ENCODE measurements at regions of chr7 and their contacts with region 1.

Region 1: DNA sequence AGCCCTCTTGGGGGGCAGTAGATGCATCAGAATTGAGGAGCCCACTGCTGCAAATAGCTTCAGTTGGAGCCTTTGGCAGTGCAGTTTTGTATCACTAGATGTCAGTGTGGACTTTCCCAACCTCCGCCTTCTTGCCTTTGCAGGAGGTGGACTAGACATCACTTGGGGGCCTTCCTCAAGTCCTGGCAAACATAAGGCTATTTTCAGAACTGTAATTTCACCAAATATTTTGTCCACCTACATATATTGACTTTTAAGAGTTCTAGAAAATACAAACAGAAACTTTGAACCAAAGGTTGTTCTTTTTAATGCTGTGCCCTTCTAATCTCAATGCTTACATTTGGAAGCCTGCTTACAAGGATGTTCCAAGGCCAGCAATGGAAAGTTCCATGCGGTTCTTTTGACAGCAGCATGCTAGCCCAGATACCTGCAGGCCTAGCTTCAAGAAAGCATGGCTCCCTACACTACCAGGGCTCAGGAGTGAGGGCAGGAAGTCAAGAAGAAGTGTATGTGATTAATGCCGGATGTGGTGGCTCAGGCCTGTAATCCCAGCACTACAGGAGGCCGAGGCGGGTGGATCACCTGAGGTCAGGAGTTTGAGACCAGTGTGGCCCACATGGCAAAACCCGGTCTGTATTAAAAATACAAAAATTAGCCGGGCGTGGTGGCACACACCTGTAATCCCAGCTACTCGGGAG is 8.0 kb upstream of the ZNRF2 start:
- DNase-seq: no peak
- ATAC-seq: peak; percentile 93
- H3K4me3 ChIP-seq: no peak overlapping the region
- H3K27ac ChIP-seq: no peak overlapping the region
- H3K4me1 ChIP-seq: peaks cover 9% of the 10 kb centered on the region; the same call in 1 of the 2 replicates
- H3K27me3 ChIP-seq: no peaks in the 10 kb centered on the region
- CTCF ChIP-seq: peak; percentile 83 to 91 (median 84)
- EP300 ChIP-seq: no peak
- POLR2A ChIP-seq: no peak
- RAD21 ChIP-seq: peak; percentile 93

Region 2: GRCh38 chr7:29968683-29969395 is 307.5 kb before region 1 on chr7:
- CTCF ChIA-PET with region 1: no interaction called
- POLR2A ChIA-PET with region 1: no interaction called
- RAD21 ChIA-PET with region 1: no interaction called
- SMC1A ChIA-PET with region 1: no interaction called
- in situ Hi-C with region 1: no loop called
- intact Hi-C with region 1: no loop called
- DNase-seq: no peak
- ATAC-seq: no peak
- H3K4me3 ChIP-seq: no peak overlapping the region
- H3K27ac ChIP-seq: no peak overlapping the region
- H3K4me1 ChIP-seq: no peaks in the 10 kb centered on the region
- H3K27me3 ChIP-seq: no peaks in the 10 kb centered on the region
- CTCF ChIP-seq: no peak
- EP300 ChIP-seq: no peak
- POLR2A ChIP-seq: no peak
- RAD21 ChIP-seq: no peak

Region 3: GRCh38 chr7:30164567-30164966 is 111.8 kb before region 1 on chr7:
- CTCF ChIA-PET with region 1: interaction called, 182 read pairs
- POLR2A ChIA-PET with region 1: interaction called, 4 read pairs
- RAD21 ChIA-PET with region 1: interaction called, 71 read pairs
- SMC1A ChIA-PET with region 1: interaction called, 148 read pairs
- in situ Hi-C with region 1: loop called (anchors 5 kb)
- intact Hi-C with region 1: loop called (anchors 1 kb)
- DNase-seq: no peak
- ATAC-seq: peak; percentile 65
- H3K4me3 ChIP-seq: no peak overlapping the region
- H3K27ac ChIP-seq: no peak overlapping the region
- H3K4me1 ChIP-seq: peaks cover 27% of the 10 kb centered on the region
- H3K27me3 ChIP-seq: no peaks in the 10 kb centered on the region
- CTCF ChIP-seq: peak; percentile 47 to 81 (median 71)
- EP300 ChIP-seq: no peak
- POLR2A ChIP-seq: no peak
- RAD21 ChIP-seq: peak; percentile 97

Region 4: GRCh38 chr7:30225863-30226613 is 50.3 kb before region 1 on chr7:
- CTCF ChIA-PET with region 1: interaction called, 15 read pairs
- POLR2A ChIA-PET with region 1: interaction called, 4 read pairs
- RAD21 ChIA-PET with region 1: interaction called, 4 read pairs
- SMC1A ChIA-PET with region 1: interaction called, 3 read pairs
- in situ Hi-C with region 1: no loop called
- intact Hi-C with region 1: loop called (anchors 2 kb)
- DNase-seq: peak; percentile 79
- ATAC-seq: peak; percentile 91
- H3K4me3 ChIP-seq: no peak overlapping the region
- H3K27ac ChIP-seq: peak overlapping the region; percentile 29; the same call in 1 of the 2 replicates
- H3K4me1 ChIP-seq: peaks cover 25% of the 10 kb centered on the region
- H3K27me3 ChIP-seq: no peaks in the 10 kb centered on the region
- CTCF ChIP-seq: no peak
- EP300 ChIP-seq: peak; percentile 83 to 91
- POLR2A ChIP-seq: no peak
- RAD21 ChIP-seq: no peak

Region 5: GRCh38 chr7:30322271-30323005 is 46.1 kb after region 1 on chr7:
- CTCF ChIA-PET with region 1: interaction called, 16 read pairs
- POLR2A ChIA-PET with region 1: no interaction called
- RAD21 ChIA-PET with region 1: interaction called, 18 read pairs
- SMC1A ChIA-PET with region 1: interaction called, 50 read pairs
- in situ Hi-C with region 1: no loop called
- intact Hi-C with region 1: no loop called
- DNase-seq: peak; percentile 74
- ATAC-seq: peak; percentile 90
- H3K4me3 ChIP-seq: peak overlapping the region; percentile 57
- H3K27ac ChIP-seq: peak overlapping the region; percentile 87
- H3K4me1 ChIP-seq: peaks cover 18% of the 10 kb centered on the region
- H3K27me3 ChIP-seq: no peaks in the 10 kb centered on the region
- CTCF ChIP-seq: no peak
- EP300 ChIP-seq: no peak
- POLR2A ChIP-seq: peak; percentile 26; the same call in 1 of the 2 replicates
- RAD21 ChIP-seq: no peak

Region 6: DNA sequence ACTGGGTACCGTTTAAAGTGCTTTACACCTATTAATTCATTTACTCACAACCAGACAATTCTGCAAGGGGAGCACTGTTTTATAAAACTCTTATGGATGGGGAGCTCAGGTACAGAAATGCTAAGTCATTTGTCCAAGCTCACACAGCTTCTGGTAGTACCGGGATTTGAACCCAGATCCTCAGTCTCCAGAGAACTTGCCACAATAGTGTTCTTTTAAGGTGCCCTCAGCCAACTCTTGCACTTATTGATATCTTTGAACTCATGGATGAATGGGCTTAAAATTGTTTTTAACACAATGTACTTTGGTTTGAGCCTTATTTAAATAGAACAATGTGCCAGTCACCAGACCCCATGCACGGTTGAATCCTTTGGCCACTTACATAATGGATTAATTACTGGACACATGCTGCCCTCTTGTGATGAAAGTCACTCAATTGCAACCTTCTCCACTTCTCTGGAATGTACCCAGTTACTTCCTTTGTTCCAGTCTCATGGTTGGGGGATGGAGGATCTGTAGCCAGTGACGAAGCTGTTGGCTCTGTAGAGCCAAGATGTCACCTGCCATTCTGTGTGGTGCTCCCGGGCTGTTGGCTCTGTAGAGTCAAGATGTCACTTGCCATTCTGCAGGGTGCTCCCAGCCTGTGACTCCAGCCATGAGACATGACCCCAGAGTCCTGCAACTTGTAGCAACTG is 136.6 kb after region 1 on chr7:
- CTCF ChIA-PET with region 1: interaction called, 42 read pairs
- POLR2A ChIA-PET with region 1: no interaction called
- RAD21 ChIA-PET with region 1: interaction called, 20 read pairs
- SMC1A ChIA-PET with region 1: interaction called, 46 read pairs
- in situ Hi-C with region 1: loop called (anchors 5 kb)
- intact Hi-C with region 1: loop called (anchors 1 kb)
- DNase-seq: peak; percentile 16
- ATAC-seq: peak; percentile 75
- H3K4me3 ChIP-seq: no peak overlapping the region
- H3K27ac ChIP-seq: no peak overlapping the region
- H3K4me1 ChIP-seq: peaks cover 8% of the 10 kb centered on the region
- H3K27me3 ChIP-seq: no peaks in the 10 kb centered on the region
- CTCF ChIP-seq: peak; percentile 38 to 59 (median 40); a peak in 5 of 6 replicates
- EP300 ChIP-seq: no peak
- POLR2A ChIP-seq: no peak
- RAD21 ChIP-seq: peak; percentile 70

Region 7: DNA sequence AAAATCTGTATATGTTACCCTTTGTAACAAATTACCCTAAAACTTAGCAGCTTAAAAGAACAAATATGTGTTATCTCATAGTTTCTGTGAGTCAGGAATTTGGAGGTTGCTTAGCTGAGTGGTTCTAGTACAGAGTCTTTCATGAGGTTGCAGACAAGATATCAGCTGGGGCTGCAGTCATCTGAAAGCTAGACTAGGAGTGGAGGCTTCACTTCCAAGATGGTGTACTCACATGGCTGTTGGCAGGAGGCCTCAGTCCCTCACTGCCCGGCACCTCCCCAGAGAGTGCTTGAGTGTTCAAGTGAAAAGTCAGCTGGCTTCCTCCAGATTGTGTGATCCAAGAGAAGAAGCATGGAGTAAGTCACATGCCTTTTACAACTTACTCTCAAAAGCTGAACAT is 245.2 kb after region 1 on chr7:
- CTCF ChIA-PET with region 1: interaction called, 12 read pairs
- POLR2A ChIA-PET with region 1: no interaction called
- RAD21 ChIA-PET with region 1: no interaction called
- SMC1A ChIA-PET with region 1: interaction called, 5 read pairs
- in situ Hi-C with region 1: no loop called
- intact Hi-C with region 1: no loop called
- DNase-seq: no peak
- ATAC-seq: no peak; the same call in 2 of the 3 replicates
- H3K4me3 ChIP-seq: no peak overlapping the region
- H3K27ac ChIP-seq: no peak overlapping the region
- H3K4me1 ChIP-seq: peaks cover 10% of the 10 kb centered on the region
- H3K27me3 ChIP-seq: no peaks in the 10 kb centered on the region
- CTCF ChIP-seq: no peak
- EP300 ChIP-seq: no peak
- POLR2A ChIP-seq: no peak
- RAD21 ChIP-seq: no peak

Region 8: DNA sequence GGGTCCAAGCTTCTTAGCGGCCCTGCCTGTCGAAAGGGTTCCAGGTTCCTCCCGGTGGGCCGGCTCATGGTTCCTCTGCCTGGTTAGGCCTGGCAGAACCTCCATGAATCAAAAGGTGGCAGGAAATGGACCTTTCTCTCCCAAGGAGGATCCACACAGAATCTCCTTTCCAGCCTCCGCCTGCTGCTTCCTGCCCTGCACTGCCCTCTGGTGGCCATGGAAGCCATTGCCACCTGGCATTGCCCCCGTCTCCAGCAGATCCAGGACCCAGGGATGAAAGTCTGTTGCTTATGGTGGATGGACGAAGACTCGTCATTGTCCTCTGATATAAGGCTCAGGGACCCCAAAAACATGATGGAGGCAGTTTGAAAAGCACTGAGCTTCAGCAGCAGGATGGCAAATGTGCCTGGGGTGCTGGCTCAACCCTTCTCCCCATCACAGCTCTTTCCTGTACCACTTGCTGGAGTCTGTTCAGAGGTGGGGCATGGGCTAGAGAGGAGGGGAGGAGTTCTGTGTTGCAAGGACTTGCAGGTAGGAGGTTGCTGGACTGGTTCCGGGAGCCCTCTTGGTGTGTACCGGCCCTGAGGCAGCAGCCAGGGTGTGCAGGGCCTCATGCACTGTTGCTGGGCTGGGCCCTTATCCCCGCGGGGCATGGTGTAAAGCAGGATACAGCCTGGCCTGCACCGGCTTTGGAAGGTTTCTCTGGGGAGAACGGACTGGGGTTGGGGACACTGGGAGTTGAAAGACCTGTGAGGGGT is 464.3 kb after region 1 on chr7:
- CTCF ChIA-PET with region 1: interaction called, 17 read pairs
- POLR2A ChIA-PET with region 1: no interaction called
- RAD21 ChIA-PET with region 1: interaction called, 9 read pairs
- SMC1A ChIA-PET with region 1: interaction called, 6 read pairs
- in situ Hi-C with region 1: no loop called
- intact Hi-C with region 1: loop called (anchors 5 kb)
- DNase-seq: no peak
- ATAC-seq: peak; percentile 90
- H3K4me3 ChIP-seq: no peak overlapping the region
- H3K27ac ChIP-seq: no peak overlapping the region
- H3K4me1 ChIP-seq: no peaks in the 10 kb centered on the region
- H3K27me3 ChIP-seq: no peaks in the 10 kb centered on the region; a peak in 2 of 4 replicates
- CTCF ChIP-seq: peak; percentile 96 to 99 (median 98); a peak in 5 of 6 replicates
- EP300 ChIP-seq: no peak
- POLR2A ChIP-seq: no peak
- RAD21 ChIP-seq: peak; percentile 94

Region 9: GRCh38 chr7:31114593-31115343 is 838.4 kb after region 1 on chr7:
- CTCF ChIA-PET with region 1: no interaction called
- POLR2A ChIA-PET with region 1: no interaction called
- RAD21 ChIA-PET with region 1: no interaction called
- SMC1A ChIA-PET with region 1: no interaction called
- in situ Hi-C with region 1: no loop called
- intact Hi-C with region 1: no loop called
- DNase-seq: no peak
- ATAC-seq: 0 out of 3 replicates have a peak, but pooled peaks have one; percentile 41
- H3K4me3 ChIP-seq: no peak overlapping the region
- H3K27ac ChIP-seq: no peak overlapping the region
- H3K4me1 ChIP-seq: no peaks in the 10 kb centered on the region
- H3K27me3 ChIP-seq: no peaks in the 10 kb centered on the region; a peak in 1 of 4 replicates
- CTCF ChIP-seq: no peak
- EP300 ChIP-seq: no peak
- POLR2A ChIP-seq: no peak
- RAD21 ChIP-seq: no peak

Measured in GM12878 (cell line).